GM10248 (cell line): ENCODE measurements at regions of chr7 and their contacts with region 1.

Region 1: DNA sequence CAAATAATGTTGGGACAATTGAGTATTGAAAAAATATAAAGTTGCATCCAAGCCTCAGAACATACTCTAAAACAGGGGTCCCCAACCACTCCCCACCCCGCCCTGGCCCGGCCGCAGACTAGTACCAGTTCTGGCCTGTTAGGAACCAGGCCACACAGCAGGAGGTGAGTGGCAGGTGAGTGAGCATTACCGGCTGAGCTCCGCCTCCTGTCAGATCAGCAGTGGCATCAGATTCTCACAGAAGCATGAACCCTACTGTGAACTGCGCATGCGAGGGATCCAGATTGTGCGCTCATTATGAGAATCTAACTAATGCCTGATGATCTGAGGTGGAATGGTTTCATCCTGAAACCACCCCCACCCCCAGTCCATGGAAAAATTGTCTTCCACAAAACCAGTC is 19.4 kb downstream of the HIPK2 start:
- DNase-seq: no peak
- CTCF ChIP-seq: no peak

Region 2: GRCh38 chr7:139745678-139746143 is 12.7 kb before region 1 on chr7:
- CTCF ChIA-PET with region 1: interaction called, 18 read pairs
- POLR2A ChIA-PET with region 1: no interaction called
- DNase-seq: no peak
- CTCF ChIP-seq: no peak

Region 3: DNA sequence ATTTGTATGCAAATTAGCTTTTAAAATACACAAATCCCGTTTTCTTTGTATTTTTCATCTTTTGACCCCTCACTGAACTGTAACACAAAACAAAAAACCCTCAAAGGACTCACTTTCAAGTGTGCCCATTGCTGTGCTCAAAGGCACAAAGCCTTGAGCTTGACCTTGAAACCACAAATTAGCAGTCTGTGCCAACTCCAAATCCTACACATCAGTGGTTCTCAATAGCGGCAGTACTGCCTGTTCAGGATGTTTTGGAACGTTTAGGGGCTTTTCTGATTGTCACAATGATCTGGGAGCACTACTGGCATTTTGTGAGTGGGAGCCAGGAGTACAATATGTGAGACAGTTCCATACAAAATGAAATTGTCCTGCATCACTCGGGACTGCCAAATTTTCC is 362.9 kb after region 1 on chr7:
- CTCF ChIA-PET with region 1: no interaction called
- POLR2A ChIA-PET with region 1: no interaction called
- DNase-seq: no peak
- CTCF ChIP-seq: no peak